CD14-positive monocyte (primary cell): ENCODE measurements at regions of chr17 and their contacts with region 1.

Region 1: GRCh38 chr17:68398691-68399637 is 58.3 kb downstream of the WIPI1 start:
- DNase-seq: peak; percentile 78 to 87 (median 82)
- H3K4me3 ChIP-seq: no peak overlapping the region
- H3K4me3 Mint-ChIP-seq: no peak overlapping the region
- H3K27ac ChIP-seq: no peak overlapping the region
- H3K27ac Mint-ChIP-seq: peak overlapping the region in 6 of 7 donors; percentile 2 to 82 (median 32)
- H3K4me1 ChIP-seq: peaks cover 10 to 20% of the 10 kb centered on the region in 2 donors
- H3K4me1 Mint-ChIP-seq: peaks cover 25% of the 10 kb centered on the region
- H3K27me3 ChIP-seq: no peaks in the 10 kb centered on the region
- H3K27me3 Mint-ChIP-seq: peaks cover 0 to 2% (median 0%) of the 10 kb centered on the region in 3 donors
- CTCF ChIP-seq: peak; percentile 91

Region 2: DNA sequence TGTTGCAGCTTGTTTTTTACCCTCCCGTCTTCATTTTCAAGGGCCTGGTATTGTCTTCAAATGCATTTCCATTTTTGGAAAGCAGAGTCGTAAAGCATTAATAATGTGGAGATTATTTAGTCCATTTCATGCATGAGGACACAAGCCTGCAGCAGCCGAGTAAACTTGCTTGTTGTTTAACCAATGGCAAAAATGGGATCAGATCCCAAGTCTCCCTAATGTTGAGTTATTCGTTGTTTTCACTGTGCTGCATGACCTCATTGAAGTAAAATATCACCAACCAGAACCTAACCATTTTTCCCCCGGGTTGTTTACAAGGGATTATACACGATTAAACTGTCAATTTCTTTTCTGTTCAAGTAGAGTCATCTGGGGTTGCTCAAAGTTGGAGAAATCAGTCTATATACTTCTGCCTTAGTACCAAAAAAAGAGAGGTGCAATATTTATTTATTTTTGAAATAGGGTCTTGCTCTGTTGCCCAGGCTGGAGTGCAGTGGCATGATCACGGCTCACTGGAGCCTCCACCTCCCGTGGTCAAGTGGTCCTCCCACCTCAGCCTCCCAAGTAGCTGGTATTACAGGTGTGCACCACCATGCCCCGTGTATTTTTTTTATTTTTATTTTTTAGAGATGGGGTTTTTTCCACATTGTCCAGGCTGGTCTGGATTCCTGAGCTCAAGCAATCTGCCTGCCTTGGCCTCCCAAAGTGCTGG is 138.8 kb before region 1 on chr17:
- intact Hi-C with region 1: loop called in 1 of 2 experiments (anchors 5 kb)
- DNase-seq: no peak
- H3K4me3 ChIP-seq: no peak overlapping the region
- H3K4me3 Mint-ChIP-seq: peak overlapping the region in 1 of 2 donors; percentile 68
- H3K27ac ChIP-seq: no peak overlapping the region
- H3K27ac Mint-ChIP-seq: no peak overlapping the region
- H3K4me1 ChIP-seq: peaks cover 32 to 36% of the 10 kb centered on the region in 2 donors
- H3K4me1 Mint-ChIP-seq: peaks cover 55% of the 10 kb centered on the region
- H3K27me3 ChIP-seq: peaks cover 0 to 4% of the 10 kb centered on the region in 2 donors
- H3K27me3 Mint-ChIP-seq: peaks cover 6 to 9% (median 8%) of the 10 kb centered on the region in 3 donors
- CTCF ChIP-seq: no peak

Region 3: GRCh38 chr17:68273722-68274121 is 125.2 kb before region 1 on chr17:
- intact Hi-C with region 1: loop called in 1 of 2 experiments (anchors 10 kb)
- DNase-seq: peak in 1 of 3 donors; percentile 24
- H3K4me3 ChIP-seq: no peak overlapping the region
- H3K4me3 Mint-ChIP-seq: no peak overlapping the region
- H3K27ac ChIP-seq: peak overlapping the region in 1 of 2 donors; percentile 62
- H3K27ac Mint-ChIP-seq: peak overlapping the region in 6 of 7 donors; percentile 24 to 78 (median 72)
- H3K4me1 ChIP-seq: no peaks in the 10 kb centered on the region
- H3K4me1 Mint-ChIP-seq: peaks cover 5% of the 10 kb centered on the region
- H3K27me3 ChIP-seq: no peaks in the 10 kb centered on the region
- H3K27me3 Mint-ChIP-seq: no peaks in the 10 kb centered on the region
- CTCF ChIP-seq: no peak

Region 4: DNA sequence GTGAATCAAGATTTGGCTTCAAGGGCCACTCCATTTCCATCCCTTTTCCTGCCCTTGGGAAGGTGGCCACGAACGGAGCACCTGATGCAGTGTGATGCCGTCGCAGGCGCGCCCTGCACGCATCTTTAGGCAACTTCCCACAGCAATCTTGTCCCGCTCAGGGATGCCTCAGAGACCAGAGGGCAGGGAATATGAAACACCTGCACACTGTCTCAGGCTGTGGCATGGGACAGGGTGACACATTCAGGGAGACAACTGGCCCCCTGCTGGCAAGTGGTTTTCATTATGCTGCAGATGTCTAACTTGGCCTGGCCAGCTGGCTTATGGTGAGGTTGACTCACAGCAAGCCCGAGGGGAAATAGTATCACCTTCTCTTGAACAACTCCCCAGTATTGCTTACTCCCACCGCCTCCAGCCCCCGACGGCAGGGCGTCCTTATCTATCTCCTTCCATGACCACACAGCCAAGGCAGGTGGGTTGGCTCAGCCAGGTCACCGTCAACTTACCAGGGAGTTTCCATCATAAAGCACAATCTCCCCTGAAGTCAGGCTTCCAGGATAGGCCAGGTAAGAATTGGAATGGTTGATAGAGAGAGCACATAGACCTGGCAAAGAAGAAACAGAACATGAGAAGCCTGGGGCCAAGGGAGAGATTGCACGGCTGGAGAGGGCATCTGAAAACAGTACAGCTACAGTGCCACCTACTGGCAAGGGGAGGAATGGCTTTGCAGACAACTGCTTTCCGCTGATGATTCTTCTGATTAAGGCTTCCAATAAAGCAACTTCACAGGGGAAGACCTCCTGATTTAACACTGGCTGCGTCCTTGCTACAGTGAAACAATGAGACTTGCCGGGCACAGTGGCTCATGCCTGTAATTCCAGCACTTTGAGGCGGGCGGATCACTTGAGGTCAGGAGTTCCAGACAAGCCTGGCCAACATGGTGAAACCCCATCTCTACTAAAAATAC is 37.2 kb after region 1 on chr17:
- intact Hi-C with region 1: loop called in 1 of 2 experiments (anchors 5 kb)
- DNase-seq: peak; percentile 65 to 76 (median 73)
- H3K4me3 ChIP-seq: no peak overlapping the region
- H3K4me3 Mint-ChIP-seq: peak overlapping the region; percentile 13 to 59
- H3K27ac ChIP-seq: no peak overlapping the region
- H3K27ac Mint-ChIP-seq: peak overlapping the region; percentile 8 to 80 (median 52)
- H3K4me1 ChIP-seq: peaks cover 45 to 50% of the 10 kb centered on the region in 2 donors
- H3K4me1 Mint-ChIP-seq: peaks cover 46% of the 10 kb centered on the region
- H3K27me3 ChIP-seq: no peaks in the 10 kb centered on the region
- H3K27me3 Mint-ChIP-seq: peaks cover 0 to 3% (median 1%) of the 10 kb centered on the region in 3 donors
- CTCF ChIP-seq: peak; percentile 89